ENCODE measurements at regions of chr9 and their contacts with region 1.

Region 1: GRCh38 chr9:32571969-32572899 is 725 bp downstream of the NDUFB6 start:
- DNase-seq: peak; percentile 72 to 77
- ATAC-seq: peak; percentile 90

Region 2: GRCh38 chr9:32384364-32385151 is 187.7 kb before region 1 on chr9 and contains the start of gene ACO1:
- intact Hi-C with region 1: loop called (anchors 5 to 10 kb)
- DNase-seq: peak; percentile 90 to 95
- ATAC-seq: peak; percentile 98
- total RNA-seq, gene ACO1: 35.5 to 41.8 TPM

Region 3: GRCh38 chr9:32455738-32456137 is 116.5 kb before region 1 on chr9:
- intact Hi-C with region 1: no loop called
- DNase-seq: no peak
- ATAC-seq: no peak

Region 4: DNA sequence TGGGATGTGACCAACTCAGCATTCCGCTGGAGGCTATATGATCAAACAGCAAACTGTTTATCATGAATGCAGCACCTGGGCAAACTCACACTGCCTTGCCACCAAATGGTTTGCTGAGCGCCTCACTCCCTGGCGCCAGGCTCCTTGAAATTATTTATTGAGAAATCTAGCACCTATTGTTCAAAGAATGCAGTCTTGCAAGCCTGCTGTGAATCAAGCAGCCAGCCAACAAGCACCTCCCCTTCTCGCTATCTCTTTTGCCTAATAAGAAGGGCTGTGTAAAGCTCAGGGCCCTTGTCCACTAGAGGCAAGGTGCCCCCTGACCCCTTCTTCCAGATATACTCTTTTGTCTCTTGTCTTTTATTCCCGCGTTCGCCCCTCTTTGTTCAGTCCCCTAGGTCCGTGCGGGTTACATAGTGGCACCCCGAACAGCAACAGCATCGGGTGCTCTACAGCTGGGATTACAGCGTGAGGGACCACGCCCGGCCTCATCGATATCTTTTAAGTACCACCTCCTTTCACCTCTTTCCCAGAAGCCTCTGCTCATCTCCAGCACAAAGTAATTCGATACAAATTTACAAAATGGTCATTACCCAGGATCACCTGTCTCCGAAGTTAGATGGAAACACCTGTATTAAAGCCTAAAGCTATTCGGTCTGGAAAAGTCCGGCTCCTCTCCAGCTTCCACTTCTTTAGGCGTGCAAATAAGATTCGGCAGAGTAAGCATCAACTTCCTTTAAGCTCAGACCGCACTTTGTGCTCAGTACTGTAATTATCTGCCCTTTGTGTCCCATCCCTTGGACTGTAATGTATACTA is 47.1 kb before region 1 on chr9:
- intact Hi-C with region 1: loop called in 1 of 2 experiments (anchors 5 kb)
- DNase-seq: peak in 1 of 2 donors; percentile 29
- ATAC-seq: peak; percentile 72

Measured in left colon (tissue), 2 donors.